CD4-positive, alpha-beta memory T cell (primary cell): ENCODE measurements at regions of chr9 and their contacts with region 1.

Region 1: GRCh38 chr9:96654443-96655197 is 497 bp downstream of the PRXL2C start:
- DNase-seq: peak; percentile 85 to 95 (median 91)
- H3K4me3 ChIP-seq: peak overlapping the region in 1 of 2 donors; percentile 70
- H3K4me3 Mint-ChIP-seq: peak overlapping the region; percentile 90 to 98 (median 94)
- H3K27ac ChIP-seq: peak overlapping the region; percentile 86
- H3K27ac Mint-ChIP-seq: peak overlapping the region; percentile 98 to 99 (median 99)
- H3K4me1 ChIP-seq: peaks cover 18% of the 10 kb centered on the region
- H3K4me1 Mint-ChIP-seq: peaks cover 18 to 34% (median 26%) of the 10 kb centered on the region in 4 donors
- H3K27me3 ChIP-seq: no peaks in the 10 kb centered on the region
- H3K27me3 Mint-ChIP-seq: peaks cover 0 to 2% of the 10 kb centered on the region in 2 donors

Region 2: GRCh38 chr9:96327694-96328352 is 326.8 kb before region 1 on chr9:
- CTCF ChIA-PET with region 1: interaction called, 30 read pairs
- POLR2A ChIA-PET with region 1: no interaction called
- intact Hi-C with region 1: loop called (anchors 1 kb)
- DNase-seq: peak; percentile 46 to 66 (median 54)
- H3K4me3 ChIP-seq: no peak overlapping the region
- H3K4me3 Mint-ChIP-seq: no peak overlapping the region
- H3K27ac ChIP-seq: no peak overlapping the region
- H3K27ac Mint-ChIP-seq: peak overlapping the region in 1 of 7 donors; percentile 29
- H3K4me1 ChIP-seq: no peaks in the 10 kb centered on the region
- H3K4me1 Mint-ChIP-seq: no peaks in the 10 kb centered on the region
- H3K27me3 ChIP-seq: no peaks in the 10 kb centered on the region
- H3K27me3 Mint-ChIP-seq: no peaks in the 10 kb centered on the region

Region 3: DNA sequence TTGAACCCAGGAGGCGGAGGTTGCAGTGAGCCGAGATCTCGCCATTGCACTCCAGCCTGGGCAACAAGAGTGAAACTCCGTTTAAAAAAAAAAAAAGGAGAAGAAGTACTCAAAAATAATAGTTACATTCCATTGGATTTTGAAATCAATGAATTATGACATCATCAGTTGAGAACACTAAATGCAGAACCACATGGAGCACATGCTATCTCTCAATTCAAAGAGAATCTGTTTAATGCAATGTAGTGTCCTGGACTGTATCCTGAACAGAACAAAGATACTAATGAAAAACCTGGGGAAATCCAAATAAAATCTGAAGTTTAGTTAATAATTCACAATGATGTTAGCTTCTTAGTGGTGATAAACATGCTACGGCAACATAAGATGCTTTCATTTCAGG is 55.3 kb before region 1 on chr9:
- CTCF ChIA-PET with region 1: no interaction called
- POLR2A ChIA-PET with region 1: no interaction called
- intact Hi-C with region 1: no loop called
- DNase-seq: no peak
- H3K4me3 ChIP-seq: no peak overlapping the region
- H3K4me3 Mint-ChIP-seq: no peak overlapping the region
- H3K27ac ChIP-seq: no peak overlapping the region
- H3K27ac Mint-ChIP-seq: no peak overlapping the region
- H3K4me1 ChIP-seq: no peaks in the 10 kb centered on the region
- H3K4me1 Mint-ChIP-seq: no peaks in the 10 kb centered on the region
- H3K27me3 ChIP-seq: no peaks in the 10 kb centered on the region
- H3K27me3 Mint-ChIP-seq: peaks cover 0 to 3% of the 10 kb centered on the region in 2 donors

Region 4: GRCh38 chr9:96619491-96620154 is 35.0 kb before region 1 on chr9 and contains the start of gene CDC14B:
- CTCF ChIA-PET with region 1: no interaction called
- POLR2A ChIA-PET with region 1: no interaction called
- intact Hi-C with region 1: loop called (anchors 2 kb)
- DNase-seq: peak; percentile 51 to 77 (median 62)
- H3K4me3 ChIP-seq: peak within 1 kb of the TSS in 1 of 2 donors; percentile 38
- H3K4me3 Mint-ChIP-seq: peak within 1 kb of the TSS; percentile 62 to 83 (median 80)
- H3K27ac ChIP-seq: no peak within 1 kb of the TSS
- H3K27ac Mint-ChIP-seq: peak within 1 kb of the TSS in 4 of 7 donors; percentile 37 to 63 (median 44)
- H3K4me1 ChIP-seq: peaks cover 9% of the 10 kb centered on the region
- H3K4me1 Mint-ChIP-seq: peaks cover 4 to 6% (median 6%) of the 10 kb centered on the region in 4 donors
- H3K27me3 ChIP-seq: peaks cover 8% of the 10 kb centered on the region
- H3K27me3 Mint-ChIP-seq: peaks cover 20 to 31% of the 10 kb centered on the region in 2 donors
- total RNA-seq, gene CDC14B: 15.8 to 17.1 TPM

Region 5: GRCh38 chr9:96686548-96687335 is 32.1 kb after region 1 on chr9:
- CTCF ChIA-PET with region 1: no interaction called
- POLR2A ChIA-PET with region 1: interaction called, 4 read pairs
- intact Hi-C with region 1: loop called (anchors 1 kb)
- DNase-seq: peak; percentile 61 to 89 (median 81)
- H3K4me3 ChIP-seq: peak overlapping the region in 1 of 2 donors; percentile 50
- H3K4me3 Mint-ChIP-seq: peak overlapping the region; percentile 72 to 91 (median 88)
- H3K27ac ChIP-seq: peak overlapping the region; percentile 36
- H3K27ac Mint-ChIP-seq: peak overlapping the region; percentile 54 to 88 (median 82)
- H3K4me1 ChIP-seq: no peaks in the 10 kb centered on the region
- H3K4me1 Mint-ChIP-seq: peaks cover 0 to 17% (median 10%) of the 10 kb centered on the region in 4 donors
- H3K27me3 ChIP-seq: no peaks in the 10 kb centered on the region
- H3K27me3 Mint-ChIP-seq: peaks cover 0 to 5% of the 10 kb centered on the region in 2 donors